OCI-LY7 (cell line): ENCODE measurements at regions of chr17 and their contacts with region 1.

Region 1: DNA sequence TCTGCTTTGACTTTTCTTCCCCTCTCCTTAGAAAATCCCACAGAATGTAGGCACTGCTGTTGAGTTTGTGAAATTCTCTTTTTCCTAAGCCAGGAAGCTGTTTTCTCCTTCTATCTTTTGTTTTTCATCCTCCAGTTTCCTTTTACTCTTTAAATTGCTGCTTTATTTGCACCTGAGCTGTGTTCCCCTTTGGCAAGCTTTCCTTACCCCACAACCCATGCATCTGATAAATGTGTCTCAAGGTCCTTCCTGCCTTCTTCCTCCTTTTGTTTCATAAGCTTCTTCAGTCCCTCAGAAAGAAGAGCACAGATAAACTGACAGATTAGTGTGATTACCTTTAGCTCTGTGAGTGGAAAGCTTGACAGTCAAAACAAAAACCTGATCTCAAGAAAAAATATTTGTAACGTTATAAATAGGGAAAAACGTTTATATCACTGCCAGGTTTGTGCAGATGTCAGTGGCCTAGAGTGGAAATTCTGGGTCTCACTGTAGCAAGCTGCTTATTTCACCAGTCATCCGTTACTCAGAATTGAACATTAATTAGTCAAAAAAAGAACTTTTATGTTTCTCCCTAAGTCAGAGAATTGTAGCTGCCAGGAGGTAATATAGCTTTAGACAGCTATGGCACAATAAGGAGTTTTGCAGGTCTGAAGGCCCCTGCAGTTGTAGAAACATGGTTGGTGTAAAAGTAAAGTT is 23.6 kb downstream of the GSDMB start:
- DNase-seq: peak; percentile 60
- H3K4me3 ChIP-seq: no peak overlapping the region
- H3K27ac ChIP-seq: peak overlapping the region; percentile 45
- H3K4me1 ChIP-seq: peaks cover 28% of the 10 kb centered on the region
- CTCF ChIP-seq: no peak

Region 2: DNA sequence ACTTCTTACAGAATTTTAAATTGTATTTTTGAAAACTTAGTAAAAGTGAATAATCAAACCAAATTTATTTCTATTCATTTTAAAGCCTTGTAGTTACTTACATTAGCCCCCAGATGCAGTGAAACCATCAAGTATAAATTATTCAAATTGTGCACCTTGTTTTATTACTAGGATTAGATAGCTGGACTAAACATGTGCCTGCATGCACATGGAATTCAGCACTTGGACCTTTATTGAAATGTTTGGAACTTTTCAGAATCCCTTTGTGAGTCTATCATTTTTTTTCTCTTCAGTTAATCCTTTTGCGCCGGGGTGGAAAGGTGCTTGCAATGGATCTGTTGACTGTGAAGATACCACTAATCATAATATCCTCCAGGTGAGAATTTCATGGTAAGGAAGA is 22.1 kb before region 1 on chr17:
- CTCF ChIA-PET with region 1: no interaction called
- POLR2A ChIA-PET with region 1: interaction called, 10 read pairs
- intact Hi-C with region 1: no loop called
- DNase-seq: no peak
- H3K4me3 ChIP-seq: no peak overlapping the region
- H3K27ac ChIP-seq: no peak overlapping the region
- H3K4me1 ChIP-seq: peaks cover 35% of the 10 kb centered on the region
- CTCF ChIP-seq: no peak

Region 3: DNA sequence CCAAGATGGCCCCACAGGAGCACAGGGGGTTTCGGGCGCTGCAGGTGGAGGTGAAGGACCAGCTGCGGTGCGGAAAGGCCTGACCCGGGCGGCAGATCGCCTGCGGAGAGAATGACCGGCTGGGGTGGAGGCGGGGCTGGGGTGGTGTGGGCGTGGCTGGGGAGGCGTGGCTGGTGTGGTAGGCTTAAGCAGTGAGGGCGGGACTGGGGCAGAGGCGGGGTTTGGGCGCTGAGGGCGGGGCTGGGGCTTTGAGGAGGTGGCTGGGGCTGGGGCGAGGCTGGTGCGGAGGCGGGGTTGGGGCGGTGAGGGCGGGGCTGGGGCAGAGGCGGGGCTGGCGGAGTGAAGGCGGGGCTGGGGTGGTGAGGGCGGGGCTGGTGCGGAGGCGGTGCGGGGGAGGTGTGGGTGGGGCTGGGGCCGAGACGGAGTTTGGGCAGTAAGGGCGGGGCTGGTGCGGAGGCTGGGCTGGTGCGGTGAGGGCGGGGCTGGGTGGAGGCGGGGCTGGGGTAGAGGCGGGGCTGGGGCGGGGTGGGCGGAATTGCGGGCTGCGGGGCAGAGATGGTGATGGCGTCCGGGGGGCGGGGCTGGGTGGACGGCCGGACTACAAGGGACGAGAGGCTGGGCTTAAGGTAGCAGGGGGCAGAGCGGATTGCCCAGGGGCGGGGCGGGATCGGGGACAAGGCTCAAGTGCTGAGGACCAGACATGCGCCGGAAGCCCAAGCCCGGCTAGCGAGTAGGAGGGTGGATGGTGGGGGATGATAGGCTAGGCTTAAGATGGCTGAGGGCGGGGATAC is 58.0 kb after region 1 on chr17:
- CTCF ChIA-PET with region 1: no interaction called
- POLR2A ChIA-PET with region 1: no interaction called
- intact Hi-C with region 1: no loop called
- DNase-seq: peak; percentile 92
- H3K4me3 ChIP-seq: peak overlapping the region; percentile 66
- H3K27ac ChIP-seq: peak overlapping the region; percentile 9
- H3K4me1 ChIP-seq: peaks cover 25% of the 10 kb centered on the region
- CTCF ChIP-seq: no peak

Region 4: DNA sequence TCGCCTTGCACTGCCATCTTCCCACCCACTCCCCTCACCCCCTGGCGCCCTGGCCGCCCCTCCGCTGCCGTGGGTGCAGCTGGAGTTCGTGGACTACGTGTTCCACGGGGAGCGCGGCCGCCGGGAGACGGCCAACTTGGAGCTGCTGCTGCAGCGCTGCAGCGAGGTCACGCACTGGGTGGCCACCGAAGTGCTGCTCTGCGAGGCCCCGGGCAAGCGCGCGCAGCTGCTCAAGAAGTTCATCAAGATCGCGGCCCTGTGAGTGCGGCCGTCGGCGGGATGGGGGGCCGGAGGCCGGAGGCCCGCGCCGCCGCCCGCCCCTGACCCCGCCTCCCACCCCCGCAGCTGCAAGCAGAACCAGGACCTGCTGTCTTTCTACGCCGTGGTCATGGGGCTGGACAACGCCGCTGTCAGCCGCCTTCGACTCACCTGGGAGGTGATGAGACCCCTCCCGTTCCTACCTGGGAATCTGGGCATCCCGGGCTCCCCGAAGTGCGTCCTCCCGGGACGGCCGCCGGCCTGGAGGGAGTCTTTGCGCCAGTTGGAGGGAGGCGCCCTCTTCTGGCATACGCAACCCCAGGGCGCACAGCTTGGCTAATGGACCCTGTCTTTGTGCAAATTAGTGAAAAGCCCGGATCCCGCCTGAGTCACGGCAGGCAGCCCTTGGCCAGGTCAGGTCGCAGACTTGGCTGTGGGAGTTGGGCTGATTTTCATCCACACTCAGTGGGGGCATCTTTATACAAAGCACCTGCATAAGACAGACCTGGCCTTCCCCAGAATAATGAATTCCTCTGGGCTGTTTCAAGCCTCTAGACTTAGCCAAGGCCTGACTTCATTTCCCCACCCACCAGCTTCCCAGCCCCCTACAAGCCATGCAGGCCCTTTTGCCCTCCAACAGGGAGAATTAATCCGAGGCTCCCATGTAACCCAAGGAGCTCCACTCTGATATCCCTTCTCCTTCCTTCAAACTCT is 296.7 kb after region 1 on chr17:
- CTCF ChIA-PET with region 1: no interaction called
- POLR2A ChIA-PET with region 1: no interaction called
- intact Hi-C with region 1: no loop called
- DNase-seq: peak; percentile 84
- H3K4me3 ChIP-seq: peak overlapping the region; percentile 70
- H3K27ac ChIP-seq: no peak overlapping the region
- H3K4me1 ChIP-seq: peaks cover 31% of the 10 kb centered on the region
- CTCF ChIP-seq: peak; percentile 88